Endothelial cell of umbilical vein (primary cell): ENCODE measurements at regions of chr18 and their contacts with region 1.

Region 1: DNA sequence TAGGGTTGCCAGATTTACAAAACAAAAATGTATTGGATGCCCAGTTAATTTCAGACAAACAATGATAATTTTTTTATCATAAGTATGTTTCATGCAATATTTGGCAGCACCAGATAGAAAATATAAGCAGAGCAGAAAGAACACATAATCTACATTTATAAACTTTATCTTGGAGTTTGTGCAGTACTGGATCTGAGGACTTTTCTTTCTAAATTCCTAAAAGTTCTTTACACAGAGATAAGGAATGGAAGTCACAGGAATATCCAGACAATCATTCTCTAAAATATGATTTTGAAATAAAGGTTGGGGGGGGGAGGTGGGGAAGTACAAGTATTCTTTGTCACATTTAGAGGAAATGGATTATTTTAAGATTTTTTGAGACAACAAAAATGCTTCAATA is 28.8 kb upstream of the MC4R start:
- DNase-seq: no peak
- H3K4me3 ChIP-seq: no peak overlapping the region
- H3K27ac ChIP-seq: no peak overlapping the region
- H3K4me1 ChIP-seq: no peaks in the 10 kb centered on the region
- H3K27me3 ChIP-seq: no peaks in the 10 kb centered on the region
- CTCF ChIP-seq: no peak
- POLR2A ChIP-seq: no peak

Region 2: GRCh38 chr18:60339018-60339417 is 62.3 kb before region 1 on chr18:
- CTCF ChIA-PET with region 1: no interaction called
- POLR2A ChIA-PET with region 1: no interaction called
- dilution Hi-C with region 1: no loop called
- intact Hi-C with region 1: no loop called
- DNase-seq: no peak
- H3K4me3 ChIP-seq: no peak overlapping the region
- H3K27ac ChIP-seq: no peak overlapping the region
- H3K4me1 ChIP-seq: no peaks in the 10 kb centered on the region
- H3K27me3 ChIP-seq: no peaks in the 10 kb centered on the region
- CTCF ChIP-seq: no peak
- POLR2A ChIP-seq: no peak

Region 3: GRCh38 chr18:60372596-60372995 is 28.8 kb before region 1 on chr18 and contains the start of gene MC4R:
- CTCF ChIA-PET with region 1: no interaction called
- POLR2A ChIA-PET with region 1: no interaction called
- dilution Hi-C with region 1: no loop called
- intact Hi-C with region 1: loop called (anchors 1 kb)
- DNase-seq: no peak
- H3K4me3 ChIP-seq: no peak within 1 kb of the TSS
- H3K27ac ChIP-seq: no peak within 1 kb of the TSS
- H3K4me1 ChIP-seq: no peaks in the 10 kb centered on the region
- H3K27me3 ChIP-seq: no peaks in the 10 kb centered on the region
- CTCF ChIP-seq: no peak
- POLR2A ChIP-seq: no peak
- total RNA-seq, gene MC4R: not detected in 2 replicates